Activated B cell treated with CpG ODN at 0.5 μM for 24 hours (primary cell): ENCODE measurements at regions of chr10 and their contacts with region 1.

Region 1: DNA sequence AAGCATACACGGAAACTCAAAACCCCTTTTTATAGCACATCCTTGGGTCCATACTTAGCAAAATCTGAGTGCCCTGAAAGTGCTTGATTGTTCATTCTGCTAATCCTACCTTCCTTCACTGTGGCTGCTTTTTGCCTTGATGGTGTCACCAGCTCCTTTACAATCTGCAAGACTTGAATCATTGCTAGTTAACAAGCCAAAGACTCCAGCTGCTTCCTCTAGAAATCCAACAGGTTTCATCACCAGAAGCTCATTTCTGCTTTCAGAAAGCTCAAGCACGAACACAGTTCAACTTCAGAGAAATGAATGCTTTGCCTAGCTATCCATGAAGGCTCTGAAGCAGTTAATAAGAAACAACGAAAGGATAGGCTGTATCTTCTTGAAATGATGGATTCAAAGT is 38.0 kb downstream of the USP6NL start:
- DNase-seq: no peak
- ATAC-seq: peak; percentile 65
- H3K4me3 Mint-ChIP-seq: peak overlapping the region; percentile 60
- H3K27ac Mint-ChIP-seq: peak overlapping the region; percentile 79
- H3K4me1 Mint-ChIP-seq: peaks cover 85% of the 10 kb centered on the region
- H3K27me3 Mint-ChIP-seq: no peaks in the 10 kb centered on the region
- CTCF ChIP-seq: no peak

Region 2: DNA sequence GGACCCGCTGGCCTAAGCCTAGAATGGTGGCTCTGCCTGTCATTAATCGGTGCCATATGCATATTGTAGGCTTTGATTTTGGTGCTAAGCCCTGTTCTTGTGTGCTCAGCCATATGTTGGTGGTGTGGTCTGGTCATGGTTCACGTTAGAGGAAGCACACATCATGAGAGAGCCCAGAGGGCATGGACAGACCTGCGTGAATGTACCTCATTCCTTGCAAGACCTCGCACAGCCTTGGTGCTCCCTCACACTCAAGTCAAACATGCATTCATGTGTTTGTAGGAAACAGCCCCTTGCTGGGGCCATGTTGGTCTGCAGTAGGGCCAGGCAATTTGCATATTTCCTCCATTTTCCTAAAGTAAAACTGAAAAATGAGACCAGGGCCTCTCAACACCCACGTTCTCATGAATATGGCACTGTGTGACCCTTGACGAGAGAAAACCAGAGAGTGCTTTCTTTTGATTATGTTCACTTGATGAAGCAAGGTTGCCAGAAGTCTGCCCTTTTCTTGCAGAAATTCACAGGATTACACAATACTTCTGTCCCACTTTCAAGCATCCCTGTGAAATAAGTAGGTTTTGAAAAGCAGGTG is 287.1 kb before region 1 on chr10:
- CTCF ChIA-PET with region 1: no interaction called
- POLR2A ChIA-PET with region 1: no interaction called
- intact Hi-C with region 1: no loop called
- DNase-seq: no peak
- ATAC-seq: no peak
- H3K4me3 Mint-ChIP-seq: no peak overlapping the region
- H3K27ac Mint-ChIP-seq: peak overlapping the region; percentile 53
- H3K4me1 Mint-ChIP-seq: peaks cover 5% of the 10 kb centered on the region
- H3K27me3 Mint-ChIP-seq: no peaks in the 10 kb centered on the region
- CTCF ChIP-seq: no peak

Region 3: DNA sequence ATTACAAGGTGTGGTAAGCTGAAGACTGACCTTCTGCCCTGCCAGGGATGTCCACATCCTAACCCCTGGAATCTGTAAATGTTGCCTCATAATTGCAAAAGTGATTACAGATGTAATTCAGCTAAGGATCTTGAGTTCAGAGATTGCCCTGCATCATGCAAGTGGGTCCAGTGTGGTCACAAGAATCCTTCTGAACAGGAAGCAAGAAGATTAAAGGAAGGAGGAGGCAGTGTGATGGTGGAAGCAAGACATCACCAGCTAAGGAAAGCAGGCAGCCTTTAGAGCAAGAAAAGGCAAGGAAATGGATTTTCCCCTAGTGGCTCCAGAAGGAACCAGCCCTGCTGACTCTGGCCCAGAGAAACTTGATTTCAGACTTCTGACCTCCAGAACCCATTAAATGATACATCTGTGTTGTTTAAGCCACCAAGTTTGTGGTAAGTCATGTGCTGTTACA is 40.1 kb before region 1 on chr10:
- CTCF ChIA-PET with region 1: interaction called, 5 read pairs
- POLR2A ChIA-PET with region 1: interaction called, 7 read pairs
- intact Hi-C with region 1: loop called (anchors 2 kb)
- DNase-seq: no peak
- ATAC-seq: no peak
- H3K4me3 Mint-ChIP-seq: peak overlapping the region; percentile 56
- H3K27ac Mint-ChIP-seq: peak overlapping the region; percentile 84
- H3K4me1 Mint-ChIP-seq: peaks cover 92% of the 10 kb centered on the region
- H3K27me3 Mint-ChIP-seq: no peaks in the 10 kb centered on the region
- CTCF ChIP-seq: no peak

Region 4: GRCh38 chr10:11560076-11560709 is 13.3 kb before region 1 on chr10:
- CTCF ChIA-PET with region 1: interaction called, 4 read pairs
- POLR2A ChIA-PET with region 1: interaction called, 11 read pairs
- intact Hi-C with region 1: loop called (anchors 1 kb)
- DNase-seq: no peak
- ATAC-seq: peak; percentile 79
- H3K4me3 Mint-ChIP-seq: peak overlapping the region; percentile 64
- H3K27ac Mint-ChIP-seq: peak overlapping the region; percentile 88
- H3K4me1 Mint-ChIP-seq: peaks cover 91% of the 10 kb centered on the region
- H3K27me3 Mint-ChIP-seq: no peaks in the 10 kb centered on the region
- CTCF ChIP-seq: no peak

Region 5: DNA sequence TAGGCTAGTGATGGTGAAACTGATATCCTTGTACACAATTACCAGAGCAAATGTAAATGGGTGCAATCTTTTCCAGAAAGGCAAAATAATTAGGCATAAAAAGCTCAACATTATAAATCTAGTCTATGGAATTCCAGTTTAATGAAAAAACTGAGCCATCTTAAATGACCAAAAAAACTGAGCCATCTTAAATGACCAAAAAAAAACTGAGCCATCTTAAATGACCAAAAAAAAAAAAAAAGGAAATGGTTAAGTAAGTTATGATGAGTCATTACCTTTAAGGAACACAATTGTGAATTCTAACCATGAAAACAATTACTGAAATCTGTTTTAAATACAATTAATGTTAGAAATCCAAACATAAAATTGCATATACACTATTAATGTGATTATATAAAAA is 12.7 kb after region 1 on chr10:
- CTCF ChIA-PET with region 1: interaction called, 3 read pairs
- POLR2A ChIA-PET with region 1: interaction called, 5 read pairs
- intact Hi-C with region 1: loop called (anchors 1 kb)
- DNase-seq: no peak
- ATAC-seq: no peak
- H3K4me3 Mint-ChIP-seq: no peak overlapping the region
- H3K27ac Mint-ChIP-seq: peak overlapping the region; percentile 59
- H3K4me1 Mint-ChIP-seq: peaks cover 71% of the 10 kb centered on the region
- H3K27me3 Mint-ChIP-seq: no peaks in the 10 kb centered on the region
- CTCF ChIP-seq: no peak

Region 6: DNA sequence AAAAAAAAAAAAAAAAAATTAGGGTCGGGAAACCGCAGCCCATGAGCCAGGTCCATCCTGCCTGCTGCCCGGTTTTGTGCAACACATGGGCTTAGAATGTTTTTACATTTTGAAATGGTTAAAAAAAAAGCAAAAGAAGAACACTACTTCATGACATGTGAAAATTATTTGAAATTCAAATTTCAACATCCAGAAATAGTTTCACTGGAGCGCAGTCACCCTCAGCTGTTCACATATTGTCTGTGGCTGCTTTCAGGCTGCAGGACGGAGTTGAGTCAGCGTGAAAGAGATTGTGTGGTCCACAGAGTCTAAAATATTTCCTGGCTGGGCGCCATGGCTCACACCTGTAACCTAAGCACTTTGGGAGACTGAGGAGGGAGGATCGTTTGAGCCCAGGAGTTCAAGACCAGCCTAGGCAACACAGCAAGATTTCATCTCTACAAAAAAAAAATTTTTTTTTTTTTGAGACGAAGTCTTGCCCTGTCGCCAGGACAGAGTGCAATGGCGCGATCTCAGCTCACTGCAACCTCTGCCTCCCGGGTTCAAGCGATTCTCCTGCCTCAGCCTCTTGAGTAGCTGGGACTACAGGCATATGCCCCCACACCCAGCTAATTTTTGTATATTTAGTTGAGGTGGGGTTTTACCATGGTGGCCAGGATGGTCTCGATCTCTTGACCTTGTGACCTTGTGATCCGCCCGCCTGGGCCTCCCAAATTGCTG is 104.7 kb after region 1 on chr10:
- CTCF ChIA-PET with region 1: no interaction called
- POLR2A ChIA-PET with region 1: interaction called, 10 read pairs
- intact Hi-C with region 1: no loop called
- DNase-seq: peak; percentile 51
- ATAC-seq: peak; percentile 80
- H3K4me3 Mint-ChIP-seq: peak overlapping the region; percentile 77
- H3K27ac Mint-ChIP-seq: peak overlapping the region; percentile 94
- H3K4me1 Mint-ChIP-seq: peaks cover 94% of the 10 kb centered on the region
- H3K27me3 Mint-ChIP-seq: no peaks in the 10 kb centered on the region
- CTCF ChIP-seq: no peak